Prostate gland (tissue), 2 donors: ENCODE measurements at regions of chr7 and their contacts with region 1.

Region 1: GRCh38 chr7:107025449-107026103 is 18.9 kb upstream of the PRKAR2B start:
- DNase-seq: no peak
- H3K4me3 ChIP-seq: no peak overlapping the region
- H3K27ac ChIP-seq: no peak overlapping the region
- H3K4me1 ChIP-seq: no peaks in the 10 kb centered on the region
- H3K27me3 ChIP-seq: no peaks in the 10 kb centered on the region
- CTCF ChIP-seq: no peak
- POLR2A ChIP-seq: no peak

Region 2: DNA sequence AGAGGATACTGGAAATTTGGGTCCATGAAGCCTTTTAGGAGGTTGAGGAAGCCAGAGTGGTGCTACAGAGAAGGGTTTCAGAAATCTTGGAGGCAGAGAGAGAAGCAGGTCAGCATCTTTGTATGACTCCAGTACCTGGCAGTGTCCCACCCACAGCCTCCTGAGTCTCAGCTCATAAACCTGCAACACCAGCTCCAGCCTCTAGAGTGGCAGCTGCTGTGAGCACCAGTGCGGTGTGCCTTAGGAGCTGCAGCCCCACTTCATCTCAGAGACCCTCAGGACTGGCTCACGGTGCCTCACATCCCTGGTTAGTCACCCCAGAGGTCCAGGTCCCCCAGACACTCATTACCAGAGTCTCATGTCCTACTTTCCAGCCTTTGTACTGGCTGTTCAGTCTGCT is 65.8 kb before region 1 on chr7:
- intact Hi-C with region 1: loop called (anchors 10 kb)
- DNase-seq: no peak
- H3K4me3 ChIP-seq: no peak overlapping the region
- H3K27ac ChIP-seq: no peak overlapping the region
- H3K4me1 ChIP-seq: no peaks in the 10 kb centered on the region
- H3K27me3 ChIP-seq: no peaks in the 10 kb centered on the region
- CTCF ChIP-seq: no peak
- POLR2A ChIP-seq: no peak

Region 3: GRCh38 chr7:107168233-107169119 is 142.9 kb after region 1 on chr7 and contains the start of gene HBP1:
- intact Hi-C with region 1: no loop called
- DNase-seq: peak; percentile 100
- H3K4me3 ChIP-seq: peak within 1 kb of the TSS; percentile 94 to 95
- H3K27ac ChIP-seq: peak within 1 kb of the TSS; percentile 100
- H3K4me1 ChIP-seq: peaks cover 3% of the 10 kb centered on the region
- H3K27me3 ChIP-seq: no peaks in the 10 kb centered on the region
- CTCF ChIP-seq: peak in 1 of 4 experiments; percentile 17
- POLR2A ChIP-seq: peak; percentile 89
- total RNA-seq, gene HBP1: 91.3 to 109 TPM